ENCODE measurements at regions of chr4 and their contacts with region 1.

Region 1: DNA sequence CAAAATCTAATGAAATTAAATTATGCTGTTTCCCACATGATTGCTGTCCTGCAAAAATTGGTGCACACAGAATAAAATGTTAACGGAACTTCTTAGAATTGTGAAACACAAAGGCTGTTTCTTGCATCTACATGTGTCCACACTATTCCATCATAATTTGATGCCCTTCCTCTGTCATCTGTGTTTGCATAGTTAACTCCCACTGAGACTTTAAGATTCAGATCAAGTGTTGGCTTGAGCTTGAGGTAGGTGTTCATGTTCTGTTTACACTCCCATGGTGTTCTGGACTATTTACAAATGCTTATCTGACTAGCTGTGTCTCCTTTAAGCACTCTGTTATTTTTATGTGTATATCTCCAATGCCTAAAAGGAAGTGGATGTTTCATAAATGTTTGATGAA is 622.8 kb downstream of the RAB28 start:
- DNase-seq: no peak
- ATAC-seq: no peak
- H3K4me3 ChIP-seq: no peak overlapping the region
- H3K27ac ChIP-seq: no peak overlapping the region
- H3K4me1 ChIP-seq: no peaks in the 10 kb centered on the region
- H3K27me3 ChIP-seq: peaks cover 0 to 16% (median 5%) of the 10 kb centered on the region in 7 donors
- CTCF ChIP-seq: no peak

Region 2: GRCh38 chr4:11720292-11720691 is 1141.0 kb before region 1 on chr4:
- intact Hi-C with region 1: no loop called
- DNase-seq: peak in 1 of 2 donors; percentile 7
- ATAC-seq: peak in 3 of 8 donors; percentile 48 to 66 (median 56)
- H3K4me3 ChIP-seq: no peak overlapping the region
- H3K27ac ChIP-seq: no peak overlapping the region
- H3K4me1 ChIP-seq: peaks cover 0 to 6% (median 0%) of the 10 kb centered on the region in 9 donors
- H3K27me3 ChIP-seq: no peaks in the 10 kb centered on the region
- CTCF ChIP-seq: peak; percentile 41 to 81 (median 73)

Region 3: DNA sequence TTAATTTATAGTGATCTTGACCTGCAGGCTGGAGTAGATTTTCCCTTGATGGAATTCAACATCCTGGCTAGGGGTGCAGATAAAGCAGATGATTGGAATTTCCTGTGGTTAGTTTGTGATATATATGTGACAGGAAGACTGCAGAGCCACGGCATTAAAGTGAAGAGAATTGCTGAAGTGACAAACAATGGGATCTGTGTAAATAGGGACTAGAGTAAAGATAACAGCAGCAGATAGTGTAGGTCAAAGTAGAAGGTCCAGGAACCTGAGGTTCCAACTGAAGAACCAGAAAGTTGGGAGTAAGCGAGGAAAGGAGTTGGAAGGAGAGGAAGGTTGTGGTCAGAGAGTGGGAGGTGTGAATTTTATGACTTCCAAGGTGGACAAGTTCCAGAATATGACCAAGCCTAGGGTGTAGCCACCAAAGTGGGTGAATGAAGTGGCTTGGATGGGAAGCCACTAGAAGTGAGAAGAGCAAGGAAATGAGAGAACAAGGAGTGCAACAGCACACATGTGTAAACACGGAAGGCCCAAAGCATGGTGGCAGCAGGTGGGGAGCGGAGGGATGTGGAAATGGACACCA is 297.8 kb after region 1 on chr4:
- intact Hi-C with region 1: loop called in 1 of 10 experiments (anchors 10 kb)
- DNase-seq: no peak
- ATAC-seq: peak in 2 of 8 donors; percentile 17 to 63
- H3K4me3 ChIP-seq: no peak overlapping the region
- H3K27ac ChIP-seq: no peak overlapping the region
- H3K4me1 ChIP-seq: peaks cover 0 to 20% (median 0%) of the 10 kb centered on the region in 9 donors
- H3K27me3 ChIP-seq: no peaks in the 10 kb centered on the region
- CTCF ChIP-seq: no peak

Measured in heart right ventricle (tissue), 16 donors.